ENCODE measurements at regions of chr5 and their contacts with region 1.

Region 1: DNA sequence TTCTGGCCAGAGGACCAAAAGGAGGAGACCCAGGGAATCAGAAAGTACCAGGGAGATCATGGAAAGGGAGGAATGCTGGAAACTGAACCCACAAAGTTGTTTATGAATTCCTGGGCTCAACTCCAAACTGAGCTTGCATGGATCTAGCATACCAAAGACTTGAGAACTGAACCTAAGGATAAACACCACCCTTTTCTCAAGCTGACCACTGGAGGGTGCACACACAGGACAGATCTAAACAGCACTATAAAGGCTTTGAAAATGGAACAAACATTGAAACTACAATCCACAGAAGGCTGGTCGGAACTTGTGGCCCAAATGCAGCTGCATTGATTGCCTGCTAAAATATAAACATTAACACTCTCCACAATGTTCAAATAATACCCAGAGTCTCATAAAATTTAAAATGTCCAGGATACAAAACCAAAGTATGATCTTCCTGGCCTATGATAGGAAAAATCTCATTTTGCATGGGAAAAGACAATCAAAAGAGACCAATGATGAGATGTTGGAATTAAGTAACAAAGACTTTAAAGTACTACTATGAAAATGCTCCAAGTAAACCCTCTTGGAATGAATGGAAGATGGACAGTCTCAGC is 15.6 kb upstream of the IRF1 start:
- DNase-seq: peak; percentile 54
- H3K4me3 ChIP-seq: no peak overlapping the region
- H3K27ac ChIP-seq: no peak overlapping the region
- H3K4me1 ChIP-seq: no peaks in the 10 kb centered on the region
- H3K27me3 ChIP-seq: no peaks in the 10 kb centered on the region
- CTCF ChIP-seq: peak; percentile 64

Region 2: GRCh38 chr5:132250547-132250946 is 255.6 kb before region 1 on chr5:
- CTCF ChIA-PET with region 1: no interaction called
- POLR2A ChIA-PET with region 1: no interaction called
- intact Hi-C with region 1: no loop called
- DNase-seq: no peak
- H3K4me3 ChIP-seq: no peak overlapping the region
- H3K27ac ChIP-seq: no peak overlapping the region
- H3K4me1 ChIP-seq: no peaks in the 10 kb centered on the region
- H3K27me3 ChIP-seq: no peaks in the 10 kb centered on the region
- CTCF ChIP-seq: no peak

Region 3: GRCh38 chr5:133959643-133960042 is 1453.5 kb after region 1 on chr5:
- CTCF ChIA-PET with region 1: no interaction called
- POLR2A ChIA-PET with region 1: interaction called, 18 read pairs
- intact Hi-C with region 1: no loop called
- DNase-seq: no peak
- H3K4me3 ChIP-seq: no peak overlapping the region
- H3K27ac ChIP-seq: no peak overlapping the region
- H3K4me1 ChIP-seq: peaks cover 7% of the 10 kb centered on the region
- H3K27me3 ChIP-seq: no peaks in the 10 kb centered on the region
- CTCF ChIP-seq: no peak